ENCODE measurements at regions of chr10 and their contacts with region 1.

Region 1: DNA sequence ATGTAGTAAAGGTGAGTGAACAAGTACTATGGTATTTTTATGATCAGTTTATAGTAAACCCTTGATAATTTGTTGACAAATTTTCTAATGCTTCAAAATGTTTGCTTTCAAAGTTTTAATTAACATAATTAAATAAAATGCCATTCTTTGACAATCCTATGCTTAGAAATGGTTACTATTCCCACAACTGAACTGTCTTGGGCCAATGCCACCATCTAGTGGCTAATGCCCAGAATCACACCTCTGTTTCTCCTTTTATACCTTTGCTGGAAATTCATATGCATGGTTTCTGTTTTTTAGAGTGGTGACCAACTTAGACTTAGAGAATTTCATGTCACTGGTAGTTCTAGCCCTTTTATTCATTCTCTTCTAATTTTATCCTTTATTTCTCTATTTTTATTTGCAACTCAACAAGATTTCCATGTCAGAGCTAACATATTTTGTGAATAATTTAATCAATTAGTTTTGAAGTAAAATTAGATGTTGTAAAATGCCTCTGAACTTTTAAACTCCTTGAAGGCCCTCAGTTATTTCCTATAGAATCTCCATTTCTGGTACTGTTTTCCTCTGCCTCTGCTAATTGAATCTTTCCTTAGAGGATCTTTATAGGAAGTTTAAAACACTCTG is 31.1 kb downstream of the PCGF5 start:
- DNase-seq: peak; percentile 50 to 69 (median 66)
- H3K4me3 ChIP-seq: no peak overlapping the region
- H3K4me3 Mint-ChIP-seq: no peak overlapping the region
- H3K27ac ChIP-seq: no peak overlapping the region
- H3K27ac Mint-ChIP-seq: peak overlapping the region in 1 of 7 donors; percentile 10
- H3K4me1 ChIP-seq: peaks cover 22% of the 10 kb centered on the region
- H3K4me1 Mint-ChIP-seq: peaks cover 5 to 9% (median 6%) of the 10 kb centered on the region in 4 donors
- H3K27me3 ChIP-seq: no peaks in the 10 kb centered on the region
- H3K27me3 Mint-ChIP-seq: no peaks in the 10 kb centered on the region

Region 2: DNA sequence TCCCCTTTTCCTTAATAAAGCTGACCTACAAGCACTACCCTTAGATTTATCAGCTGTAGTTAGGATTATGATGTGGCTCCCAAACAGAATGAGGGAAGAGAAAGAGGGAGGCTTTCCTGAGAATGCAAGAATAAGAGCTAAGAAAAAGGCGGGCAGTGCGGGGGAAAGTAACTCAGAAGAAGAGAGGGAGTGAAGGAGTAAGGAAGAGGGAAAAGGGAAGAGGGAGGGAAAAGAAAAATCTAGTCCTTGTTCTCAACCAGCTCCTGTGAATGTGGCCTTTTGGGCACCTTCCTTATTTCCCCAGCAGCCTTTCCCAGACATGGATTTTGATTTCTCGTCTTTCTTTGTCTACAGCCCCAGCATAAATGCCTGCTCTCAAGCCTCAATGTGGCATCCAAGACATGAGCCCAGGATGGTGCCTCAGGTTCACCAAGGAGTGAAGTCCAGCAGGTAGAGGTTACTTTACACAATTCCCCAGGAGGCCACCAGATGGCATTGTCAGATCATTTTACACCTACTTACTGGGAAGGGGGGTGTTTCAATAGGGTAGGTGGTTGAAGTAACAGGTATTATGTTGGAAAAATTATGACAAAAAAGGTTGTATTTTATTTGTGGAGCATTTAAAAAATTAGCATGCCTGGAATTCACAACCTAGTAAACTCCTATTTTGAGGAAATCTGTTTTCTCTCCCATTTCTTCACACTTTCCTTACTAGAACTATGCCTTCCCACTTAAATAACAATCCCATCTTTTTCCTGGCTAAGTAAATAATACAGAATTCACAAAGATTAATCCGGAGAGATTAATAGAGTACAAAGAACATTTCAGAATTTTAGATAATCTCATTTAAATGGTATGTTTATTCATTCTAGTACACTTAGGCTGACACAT is 500.2 kb before region 1 on chr10:
- CTCF ChIA-PET with region 1: interaction called, 3 read pairs
- POLR2A ChIA-PET with region 1: no interaction called
- intact Hi-C with region 1: loop called (anchors 5 kb)
- DNase-seq: peak; percentile 16 to 45 (median 29)
- H3K4me3 ChIP-seq: no peak overlapping the region
- H3K4me3 Mint-ChIP-seq: no peak overlapping the region
- H3K27ac ChIP-seq: no peak overlapping the region
- H3K27ac Mint-ChIP-seq: no peak overlapping the region
- H3K4me1 ChIP-seq: no peaks in the 10 kb centered on the region
- H3K4me1 Mint-ChIP-seq: no peaks in the 10 kb centered on the region
- H3K27me3 ChIP-seq: no peaks in the 10 kb centered on the region
- H3K27me3 Mint-ChIP-seq: peaks cover 14% of the 10 kb centered on the region in 2 donors

Region 3: DNA sequence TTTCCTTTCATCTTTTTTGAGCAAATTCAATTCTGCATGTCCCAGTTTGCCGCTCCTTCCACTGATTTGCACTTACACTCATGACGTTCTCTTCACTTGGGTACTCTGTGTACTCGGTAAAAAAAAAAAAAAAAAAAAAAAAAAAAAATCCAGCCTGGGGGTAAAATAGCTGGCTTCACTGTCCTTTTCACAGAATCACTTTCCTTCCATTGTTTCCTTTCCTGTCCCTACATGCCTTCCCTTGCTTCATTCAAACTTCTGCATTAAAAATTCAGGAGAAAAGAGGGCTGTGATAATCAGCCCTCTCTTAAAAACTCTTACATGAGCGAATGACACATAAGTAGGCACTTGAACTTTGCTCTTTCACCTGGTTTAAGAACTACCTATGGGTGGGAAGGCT is 339.4 kb before region 1 on chr10:
- CTCF ChIA-PET with region 1: interaction called, 46 read pairs
- POLR2A ChIA-PET with region 1: interaction called, 6 read pairs
- intact Hi-C with region 1: loop called (anchors 1 kb)
- DNase-seq: no peak
- H3K4me3 ChIP-seq: no peak overlapping the region
- H3K4me3 Mint-ChIP-seq: no peak overlapping the region
- H3K27ac ChIP-seq: no peak overlapping the region
- H3K27ac Mint-ChIP-seq: peak overlapping the region in 1 of 7 donors; percentile 61
- H3K4me1 ChIP-seq: no peaks in the 10 kb centered on the region
- H3K4me1 Mint-ChIP-seq: peaks cover 0 to 4% (median 2%) of the 10 kb centered on the region in 4 donors
- H3K27me3 ChIP-seq: no peaks in the 10 kb centered on the region
- H3K27me3 Mint-ChIP-seq: peaks cover 1 to 4% of the 10 kb centered on the region in 2 donors

Region 4: DNA sequence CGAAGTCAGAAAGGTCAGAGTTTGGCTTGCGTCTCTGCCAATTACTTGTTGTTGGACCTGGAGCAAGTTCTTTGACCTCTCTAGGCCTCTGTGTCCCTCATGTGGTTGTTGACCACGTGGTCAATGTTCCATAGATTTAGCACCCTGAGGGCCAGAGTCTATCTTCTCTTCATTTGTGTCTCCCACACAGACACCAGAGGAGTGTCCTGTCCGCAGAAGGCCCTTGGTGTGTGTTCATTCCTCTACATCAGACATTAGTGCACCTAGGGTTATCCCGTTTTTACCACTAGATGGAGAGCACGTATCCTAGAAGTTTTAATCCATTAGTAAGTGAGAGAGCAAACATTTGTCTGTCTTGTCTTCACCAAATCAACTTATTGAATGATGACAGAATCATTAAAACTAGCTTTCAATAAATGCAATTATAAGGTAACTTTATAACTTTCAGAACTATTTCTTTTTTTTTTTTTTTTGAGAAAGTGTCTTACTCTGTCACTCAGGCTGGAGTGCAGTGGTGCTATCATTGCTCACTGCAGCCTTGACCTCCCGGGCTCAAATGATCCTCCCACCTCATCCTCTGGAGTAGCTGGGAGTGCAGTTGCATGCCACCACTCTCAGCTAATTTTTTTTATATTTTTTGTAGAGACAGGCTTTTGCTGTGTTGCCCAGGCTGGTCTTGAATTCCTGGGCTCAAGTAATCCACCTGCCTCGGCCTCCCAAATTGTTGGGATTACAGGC is 208.2 kb before region 1 on chr10:
- CTCF ChIA-PET with region 1: interaction called, 5 read pairs
- POLR2A ChIA-PET with region 1: no interaction called
- intact Hi-C with region 1: loop called (anchors 1 kb)
- DNase-seq: no peak
- H3K4me3 ChIP-seq: no peak overlapping the region
- H3K4me3 Mint-ChIP-seq: no peak overlapping the region
- H3K27ac ChIP-seq: no peak overlapping the region
- H3K27ac Mint-ChIP-seq: no peak overlapping the region
- H3K4me1 ChIP-seq: no peaks in the 10 kb centered on the region
- H3K4me1 Mint-ChIP-seq: no peaks in the 10 kb centered on the region
- H3K27me3 ChIP-seq: no peaks in the 10 kb centered on the region
- H3K27me3 Mint-ChIP-seq: peaks cover 6 to 13% of the 10 kb centered on the region in 2 donors

Region 5: DNA sequence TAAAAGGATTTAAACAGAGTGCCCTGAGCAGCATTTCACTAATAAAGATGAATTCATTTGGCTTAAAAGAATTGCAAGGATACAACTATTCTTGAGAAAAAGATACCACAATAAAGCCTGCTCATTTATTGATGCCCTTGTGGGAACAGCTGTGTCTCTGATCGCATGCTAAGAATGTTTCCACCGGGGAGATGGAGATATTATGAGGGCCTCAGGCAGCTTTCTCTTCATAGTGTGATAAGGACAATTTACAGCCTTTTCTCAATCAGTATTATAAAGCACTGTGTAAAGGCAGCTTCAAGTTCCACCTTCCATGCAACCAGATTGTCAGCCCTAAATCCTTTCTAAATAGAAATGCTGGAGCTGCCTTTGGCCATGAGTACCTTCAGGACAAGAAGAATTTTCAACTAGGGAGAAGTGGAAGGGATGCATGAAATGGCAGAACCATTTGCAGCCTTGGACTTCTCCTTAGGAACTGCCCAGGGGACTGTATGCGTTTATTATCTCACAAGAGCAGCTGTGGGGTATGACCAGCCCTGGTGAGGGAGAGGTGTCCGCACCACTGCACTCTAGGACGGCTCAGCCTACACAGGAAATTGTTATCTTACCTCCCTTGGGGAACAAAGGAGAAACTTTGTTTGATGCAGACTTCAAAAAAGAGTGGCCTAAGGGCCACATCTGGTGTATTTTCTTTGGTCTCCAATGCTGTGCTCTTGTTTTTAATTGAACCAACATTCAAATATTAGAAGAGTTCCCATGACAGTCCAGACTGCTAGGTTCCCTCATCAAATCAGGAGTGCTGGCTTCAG is 148.0 kb before region 1 on chr10:
- CTCF ChIA-PET with region 1: interaction called, 13 read pairs
- POLR2A ChIA-PET with region 1: no interaction called
- intact Hi-C with region 1: no loop called
- DNase-seq: no peak
- H3K4me3 ChIP-seq: no peak overlapping the region
- H3K4me3 Mint-ChIP-seq: no peak overlapping the region
- H3K27ac ChIP-seq: no peak overlapping the region
- H3K27ac Mint-ChIP-seq: no peak overlapping the region
- H3K4me1 ChIP-seq: no peaks in the 10 kb centered on the region
- H3K4me1 Mint-ChIP-seq: peaks cover 0 to 1% (median under 1%) of the 10 kb centered on the region in 4 donors
- H3K27me3 ChIP-seq: no peaks in the 10 kb centered on the region
- H3K27me3 Mint-ChIP-seq: no peaks in the 10 kb centered on the region